ENCODE measurements at regions of chr11 and their contacts with region 1.

Region 1: DNA sequence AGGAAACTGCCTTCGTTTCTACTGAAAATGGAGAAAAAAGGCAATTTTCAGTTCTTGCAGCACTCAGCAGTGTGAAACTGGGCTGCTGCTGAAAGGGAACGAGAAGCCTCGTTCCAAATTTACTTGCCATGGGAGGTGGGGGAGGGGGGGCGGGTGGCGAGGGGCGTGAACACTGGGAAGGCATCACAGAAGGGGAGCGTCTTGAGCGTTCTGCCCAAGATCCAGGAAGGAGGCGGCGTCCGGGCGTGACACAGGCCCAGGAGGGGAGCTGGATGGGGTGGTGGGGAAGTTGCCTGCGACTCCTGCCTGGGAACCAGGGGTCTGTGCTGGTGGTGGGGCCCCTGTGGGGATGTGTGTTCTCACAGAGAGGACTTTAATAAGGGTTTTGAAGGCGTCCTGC is 213.5 kb downstream of the CTTN start:
- DNase-seq: no peak
- H3K4me3 ChIP-seq: no peak overlapping the region
- H3K27ac ChIP-seq: no peak overlapping the region
- H3K4me1 ChIP-seq: peaks cover 13% of the 10 kb centered on the region
- H3K27me3 ChIP-seq: no peaks in the 10 kb centered on the region
- CTCF ChIP-seq: no peak
- POLR2A ChIP-seq: no peak

Region 2: GRCh38 chr11:70522593-70523311 is 89.1 kb before region 1 on chr11:
- intact Hi-C with region 1: no loop called
- DNase-seq: no peak
- H3K4me3 ChIP-seq: no peak overlapping the region
- H3K27ac ChIP-seq: no peak overlapping the region
- H3K4me1 ChIP-seq: no peaks in the 10 kb centered on the region
- H3K27me3 ChIP-seq: no peaks in the 10 kb centered on the region
- CTCF ChIP-seq: no peak
- POLR2A ChIP-seq: no peak

Region 3: GRCh38 chr11:70577948-70578347 is 33.9 kb before region 1 on chr11:
- intact Hi-C with region 1: loop called (anchors 2 kb)
- DNase-seq: no peak
- H3K4me3 ChIP-seq: no peak overlapping the region
- H3K27ac ChIP-seq: no peak overlapping the region
- H3K4me1 ChIP-seq: no peaks in the 10 kb centered on the region
- H3K27me3 ChIP-seq: no peaks in the 10 kb centered on the region
- CTCF ChIP-seq: no peak
- POLR2A ChIP-seq: no peak

Measured in vagina (tissue), 2 donors.